Breast epithelium (tissue), 4 donors: ENCODE measurements at regions of chr1 and their contacts with region 1.

Region 1: DNA sequence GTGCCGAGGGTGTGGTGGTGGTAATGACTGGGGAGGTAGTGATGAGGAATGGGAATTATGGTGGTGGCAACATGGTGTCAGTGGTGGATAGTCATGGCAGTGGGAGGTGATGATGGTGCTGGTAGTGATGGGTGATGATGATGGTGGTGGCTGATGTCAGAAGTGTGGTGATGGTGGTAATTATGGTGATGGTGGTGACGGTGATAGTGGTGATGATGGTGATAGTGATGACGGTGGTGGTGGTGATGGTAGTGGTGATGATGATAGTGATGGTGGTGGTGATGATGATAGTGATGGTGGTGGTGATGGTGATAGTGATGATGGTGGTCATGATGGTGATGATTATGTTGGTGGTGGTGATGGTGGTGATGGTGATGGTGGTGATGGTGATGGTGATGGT is 162.8 kb downstream of the NPHP4 start:
- DNase-seq: no peak
- H3K4me3 ChIP-seq: no peak overlapping the region
- H3K27ac ChIP-seq: no peak overlapping the region
- H3K4me1 ChIP-seq: no peaks in the 10 kb centered on the region
- H3K27me3 ChIP-seq: peaks cover 0 to 40% of the 10 kb centered on the region in 2 donors
- CTCF ChIP-seq: no peak
- POLR2A ChIP-seq: no peak

Region 2: DNA sequence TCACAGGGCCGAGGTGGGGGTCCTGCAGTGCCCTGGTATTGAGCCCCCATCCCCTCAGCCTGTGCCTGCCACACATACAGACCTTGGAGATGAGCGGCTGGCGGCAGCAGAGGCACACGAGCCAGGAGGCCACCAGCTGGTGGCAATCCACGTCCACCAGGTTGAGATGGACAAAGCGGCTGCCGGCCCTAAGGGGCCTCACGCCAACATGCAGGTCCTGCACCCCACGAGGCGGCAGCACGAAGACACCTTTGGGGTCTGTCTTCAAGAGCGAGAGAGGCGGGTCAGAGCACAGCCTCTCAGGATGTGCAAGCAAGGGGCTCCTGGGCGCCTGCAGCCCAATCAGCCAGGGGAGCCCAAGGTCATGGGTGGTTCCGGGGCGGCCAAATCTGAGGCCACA is 34.8 kb after region 1 on chr1:
- intact Hi-C with region 1: loop called (anchors 1 kb)
- DNase-seq: no peak
- H3K4me3 ChIP-seq: no peak overlapping the region
- H3K27ac ChIP-seq: no peak overlapping the region
- H3K4me1 ChIP-seq: no peaks in the 10 kb centered on the region
- H3K27me3 ChIP-seq: no peaks in the 10 kb centered on the region
- CTCF ChIP-seq: no peak
- POLR2A ChIP-seq: no peak